Aorta (tissue), 5 donors: ENCODE measurements at regions of chr4 and their contacts with region 1.

Region 1: DNA sequence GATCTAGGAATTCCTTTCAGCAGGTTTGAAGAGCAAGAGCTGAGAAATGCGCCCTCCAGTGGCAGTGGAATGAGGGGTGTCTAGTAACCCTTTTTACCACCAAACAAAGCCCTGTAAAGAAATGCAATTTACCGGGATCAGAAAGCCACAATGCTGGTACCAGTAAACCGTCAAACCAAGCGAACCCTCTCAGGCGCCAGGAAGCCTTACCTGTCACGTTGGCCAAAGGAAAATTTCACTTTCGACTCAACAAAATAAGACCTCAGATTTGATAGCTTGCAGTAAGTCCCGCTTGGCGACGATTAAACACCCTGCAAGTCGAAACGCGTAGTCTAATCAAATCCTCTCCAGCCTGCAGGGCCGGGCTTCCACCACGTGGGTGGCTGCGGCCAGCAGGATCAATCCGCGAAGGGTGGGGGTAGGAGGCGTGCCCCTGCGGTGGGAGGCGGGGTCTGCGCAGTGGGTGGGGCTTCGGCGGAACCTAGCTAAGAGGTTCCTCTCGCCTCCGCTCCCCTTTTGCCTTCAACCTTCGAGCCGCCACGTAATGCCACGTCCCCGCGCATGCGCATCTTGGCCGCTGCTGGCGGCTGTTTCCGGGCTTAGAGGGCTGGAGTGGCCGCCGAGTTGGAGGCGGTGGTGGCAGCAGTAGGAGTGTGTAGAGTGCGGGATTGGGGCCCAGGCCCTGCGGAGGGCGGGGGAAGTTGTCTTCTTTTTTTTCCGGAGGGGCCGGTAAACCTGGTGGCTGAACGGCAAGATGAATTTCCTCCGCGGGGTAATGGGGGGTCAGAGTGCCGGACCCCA is at the start of gene USO1:
- DNase-seq: peak; percentile 99 to 100
- ATAC-seq: peak; percentile 99
- H3K4me3 ChIP-seq: peak within 1 kb of the TSS; percentile 75 to 83
- H3K27ac ChIP-seq: peak within 1 kb of the TSS; percentile 78 to 87
- H3K4me1 ChIP-seq: peaks cover 0 to 6% of the 10 kb centered on the region in 2 donors
- H3K27me3 ChIP-seq: no peaks in the 10 kb centered on the region
- total RNA-seq, gene USO1: 77.2 to 86.6 TPM

Region 2: GRCh38 chr4:75673027-75673958 is 51.0 kb before region 1 on chr4 and contains the start of gene G3BP2:
- intact Hi-C with region 1: loop called (anchors 1 to 2 kb)
- DNase-seq: peak; percentile 99
- ATAC-seq: peak; percentile 99
- H3K4me3 ChIP-seq: peak within 1 kb of the TSS; percentile 63 to 82
- H3K27ac ChIP-seq: peak within 1 kb of the TSS; percentile 45 to 85
- H3K4me1 ChIP-seq: peaks cover 0 to 8% of the 10 kb centered on the region in 2 donors
- H3K27me3 ChIP-seq: no peaks in the 10 kb centered on the region
- total RNA-seq, gene G3BP2: 99.6 to 99.7 TPM

Region 3: GRCh38 chr4:75790024-75790423 is 65.8 kb after region 1 on chr4:
- intact Hi-C with region 1: loop called in 1 of 2 experiments (anchors 10 kb)
- DNase-seq: no peak
- ATAC-seq: no peak
- H3K4me3 ChIP-seq: no peak overlapping the region
- H3K27ac ChIP-seq: no peak overlapping the region
- H3K4me1 ChIP-seq: no peaks in the 10 kb centered on the region
- H3K27me3 ChIP-seq: no peaks in the 10 kb centered on the region